PC-9 (cell line): ENCODE measurements at regions of chr17 and their contacts with region 1.

Region 1: DNA sequence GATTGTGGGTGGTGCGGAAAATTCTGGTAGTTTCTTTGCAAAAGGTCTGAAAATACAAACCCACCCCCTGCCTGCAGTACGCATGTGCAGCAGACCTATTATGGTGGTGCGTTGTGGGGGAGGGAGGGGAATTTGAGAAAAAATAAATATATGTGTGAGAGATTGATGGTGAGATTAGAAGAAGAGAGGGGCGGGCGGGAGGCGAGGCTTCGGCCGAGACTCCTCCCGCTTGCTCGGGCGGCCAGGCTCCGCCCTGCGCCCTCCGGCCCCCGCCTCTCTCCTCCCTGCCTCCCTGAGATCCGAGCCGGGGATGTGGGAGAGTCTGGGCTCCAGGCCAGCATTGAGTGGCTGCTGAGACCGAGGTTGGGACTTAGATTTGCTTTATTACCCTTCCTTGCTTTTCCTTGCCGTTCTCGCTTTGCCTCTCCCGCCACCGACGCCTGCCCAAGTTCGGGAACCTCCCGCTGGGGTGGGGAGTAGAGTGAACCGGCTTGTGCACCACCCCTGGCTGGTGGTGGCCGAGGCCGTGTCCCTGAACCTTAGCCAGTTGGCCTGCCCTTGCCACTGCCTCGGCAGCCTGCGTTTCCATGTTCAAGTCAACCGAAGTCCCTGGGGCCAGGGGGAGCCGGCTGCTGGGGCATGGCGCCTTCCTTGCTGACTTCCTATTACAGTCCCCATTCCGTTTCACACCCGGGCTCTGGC is 956 bp upstream of the CHD3 start:
- DNase-seq: peak; percentile 88 to 94
- H3K4me3 ChIP-seq: peak overlapping the region; percentile 84
- H3K27ac ChIP-seq: peak overlapping the region; percentile 80
- H3K4me1 ChIP-seq: peaks cover 27% of the 10 kb centered on the region
- H3K27me3 ChIP-seq: no peaks in the 10 kb centered on the region
- CTCF ChIP-seq: no peak

Region 2: GRCh38 chr17:7834962-7835813 is 52.4 kb before region 1 on chr17:
- CTCF ChIA-PET with region 1: no interaction called
- POLR2A ChIA-PET with region 1: no interaction called
- intact Hi-C with region 1: loop called (anchors 1 kb)
- DNase-seq: peak; percentile 84 to 96
- H3K4me3 ChIP-seq: peak overlapping the region; percentile 82
- H3K27ac ChIP-seq: 0 out of 2 replicates have a peak overlapping the region, but pooled peaks have one; percentile 23
- H3K4me1 ChIP-seq: peaks cover 18% of the 10 kb centered on the region
- H3K27me3 ChIP-seq: no peaks in the 10 kb centered on the region
- CTCF ChIP-seq: peak; percentile 63; the same call in 1 of the 2 replicates

Region 3: GRCh38 chr17:7931709-7932482 is 44.3 kb after region 1 on chr17 and contains the starts of genes CNTROB and TRAPPC1:
- CTCF ChIA-PET with region 1: no interaction called
- POLR2A ChIA-PET with region 1: interaction called, 4 read pairs
- intact Hi-C with region 1: loop called (anchors 5 kb)
- DNase-seq: peak; percentile 87 to 100
- H3K4me3 ChIP-seq: peak within 1 kb of the TSS; percentile 88
- H3K27ac ChIP-seq: no peak within 1 kb of the TSS
- H3K4me1 ChIP-seq: peaks cover 11% of the 10 kb centered on the region
- H3K27me3 ChIP-seq: no peaks in the 10 kb centered on the region
- CTCF ChIP-seq: no peak
- total RNA-seq, gene CNTROB: 62.3 and 65.1 TPM in 2 replicates
- total RNA-seq, gene TRAPPC1: 181 and 224 TPM in 2 replicates

Region 4: DNA sequence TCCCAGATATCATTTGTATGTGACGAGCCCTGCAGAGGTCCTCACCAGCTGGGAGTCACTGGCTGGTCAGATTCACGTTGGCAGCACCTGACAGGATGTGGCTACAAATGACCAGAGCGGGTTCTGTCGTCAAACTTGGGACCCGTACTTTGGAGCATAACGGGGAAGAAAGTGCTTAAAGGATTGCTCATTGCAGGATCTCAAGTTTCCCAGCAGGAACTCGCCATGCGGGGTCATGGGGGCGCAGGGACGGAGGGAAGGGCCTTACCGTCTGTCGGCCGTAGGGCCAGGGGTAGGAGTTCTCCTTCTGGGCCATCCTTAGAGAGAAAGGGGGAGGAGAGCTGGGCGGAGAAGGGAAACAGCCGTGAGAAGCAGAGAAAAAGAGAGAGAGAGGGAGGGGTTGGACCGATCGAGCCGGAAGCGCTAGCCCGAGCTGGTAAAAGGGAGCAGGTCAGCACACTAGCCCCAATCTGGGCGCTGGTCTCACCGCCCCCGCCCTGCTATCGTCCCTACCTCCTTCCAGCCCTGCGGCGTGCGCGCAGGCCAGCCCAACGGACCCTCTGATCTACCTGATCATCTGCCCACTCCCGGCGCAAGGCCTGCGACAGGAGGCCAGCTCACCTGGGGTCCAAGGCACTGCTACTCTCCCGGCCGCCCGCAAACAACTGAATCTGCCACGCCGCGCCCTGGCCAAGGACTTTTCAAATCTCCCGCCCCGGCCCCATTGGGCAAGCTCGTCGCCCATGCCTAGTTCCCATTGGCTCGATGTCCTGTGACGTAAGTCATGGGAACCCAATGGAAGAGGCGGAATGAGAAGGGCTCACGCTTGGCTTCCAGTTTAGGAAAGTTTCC is 322.5 kb after region 1 on chr17 and contains the start of gene AURKB:
- CTCF ChIA-PET with region 1: no interaction called
- POLR2A ChIA-PET with region 1: no interaction called
- intact Hi-C with region 1: no loop called
- DNase-seq: peak; percentile 84 to 96
- H3K4me3 ChIP-seq: peak within 1 kb of the TSS; percentile 70
- H3K27ac ChIP-seq: peak within 1 kb of the TSS; percentile 55
- H3K4me1 ChIP-seq: peaks cover 12% of the 10 kb centered on the region
- H3K27me3 ChIP-seq: no peaks in the 10 kb centered on the region
- CTCF ChIP-seq: no peak
- total RNA-seq, gene AURKB: 159 and 167 TPM in 2 replicates